ENCODE measurements at regions of chr5 and their contacts with region 1.

Region 1: GRCh38 chr5:71455427-71456361 is at the start of gene BDP1:
- DNase-seq: peak; percentile 94
- H3K4me3 Mint-ChIP-seq: peak within 1 kb of the TSS; percentile 98
- H3K27ac Mint-ChIP-seq: peak within 1 kb of the TSS; percentile 100
- H3K4me1 Mint-ChIP-seq: peaks cover 30% of the 10 kb centered on the region
- H3K27me3 Mint-ChIP-seq: peaks cover under 1% of the 10 kb centered on the region
- total RNA-seq, gene BDP1: 41.2 and 41.5 TPM in 2 replicates

Region 2: GRCh38 chr5:71586941-71587765 is 131.5 kb after region 1 on chr5 and contains the start of gene MCCC2:
- intact Hi-C with region 1: loop called (anchors 1 kb)
- DNase-seq: peak; percentile 96
- H3K4me3 Mint-ChIP-seq: peak within 1 kb of the TSS; percentile 95
- H3K27ac Mint-ChIP-seq: peak within 1 kb of the TSS; percentile 99
- H3K4me1 Mint-ChIP-seq: peaks cover 36% of the 10 kb centered on the region
- H3K27me3 Mint-ChIP-seq: no peaks in the 10 kb centered on the region
- total RNA-seq, gene MCCC2: 49.8 and 53.8 TPM in 2 replicates

Region 3: GRCh38 chr5:71740015-71740753 is 284.5 kb after region 1 on chr5:
- intact Hi-C with region 1: no loop called
- DNase-seq: no peak
- H3K4me3 Mint-ChIP-seq: no peak overlapping the region
- H3K27ac Mint-ChIP-seq: no peak overlapping the region
- H3K4me1 Mint-ChIP-seq: no peaks in the 10 kb centered on the region
- H3K27me3 Mint-ChIP-seq: peaks cover 15% of the 10 kb centered on the region

Measured in activated T-helper 1 cell treated with anti-CD3 and anti-CD28 coated beads, Interleukin-12 subunit alpha, Interleukin-12 subunit beta, Interleukin-2, Interleukin-4 antibody, amounts not matched to agents 30 ng/mL and 10 ng/mL and 1 ng/mL, durations not matched to agents 14 hours and 24 hours and 36 hours (primary cell).